ENCODE measurements at regions of chr4 and their contacts with region 1.

Region 1: DNA sequence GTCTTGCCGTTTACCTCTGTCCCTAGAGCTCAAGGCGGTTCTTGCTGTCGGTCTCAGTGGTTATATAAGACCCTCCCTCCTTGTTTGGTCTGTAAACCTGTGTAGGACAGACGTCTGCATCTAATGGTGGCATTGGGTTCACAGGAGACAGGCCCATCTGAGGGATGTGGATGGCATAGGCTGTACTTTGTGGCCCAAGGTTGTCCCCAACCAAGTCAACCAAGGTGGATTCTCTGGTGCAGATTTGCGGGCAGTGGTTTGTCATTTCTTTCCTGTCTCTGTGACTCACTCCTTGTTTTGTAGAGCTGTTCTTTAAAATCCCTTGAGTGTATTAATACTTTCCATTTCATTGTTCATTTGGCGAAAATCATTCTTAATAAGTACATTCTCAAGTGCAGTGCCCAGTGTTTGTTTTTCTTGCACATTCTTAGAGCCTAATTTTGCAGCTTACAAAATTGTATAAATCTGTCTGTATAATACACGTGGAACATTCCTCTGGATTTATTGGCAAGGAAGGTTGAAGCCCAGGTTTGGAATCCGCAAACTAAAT is 68.0 kb upstream of the TLR2 start:
- DNase-seq: peak; percentile 80
- ATAC-seq: peak; percentile 96
- H3K4me3 Mint-ChIP-seq: no peak overlapping the region
- H3K27ac Mint-ChIP-seq: peak overlapping the region; percentile 72
- H3K4me1 Mint-ChIP-seq: peaks cover 40% of the 10 kb centered on the region
- H3K27me3 Mint-ChIP-seq: no peaks in the 10 kb centered on the region

Region 2: GRCh38 chr4:153549401-153549800 is 66.7 kb before region 1 on chr4:
- CTCF ChIA-PET with region 1: no interaction called
- POLR2A ChIA-PET with region 1: no interaction called
- intact Hi-C with region 1: loop called in 1 of 2 experiments (anchors 1 kb)
- DNase-seq: peak; percentile 46
- ATAC-seq: peak; percentile 92
- H3K4me3 Mint-ChIP-seq: no peak overlapping the region
- H3K27ac Mint-ChIP-seq: peak overlapping the region; percentile 47
- H3K4me1 Mint-ChIP-seq: peaks cover 50% of the 10 kb centered on the region
- H3K27me3 Mint-ChIP-seq: no peaks in the 10 kb centered on the region

Region 3: DNA sequence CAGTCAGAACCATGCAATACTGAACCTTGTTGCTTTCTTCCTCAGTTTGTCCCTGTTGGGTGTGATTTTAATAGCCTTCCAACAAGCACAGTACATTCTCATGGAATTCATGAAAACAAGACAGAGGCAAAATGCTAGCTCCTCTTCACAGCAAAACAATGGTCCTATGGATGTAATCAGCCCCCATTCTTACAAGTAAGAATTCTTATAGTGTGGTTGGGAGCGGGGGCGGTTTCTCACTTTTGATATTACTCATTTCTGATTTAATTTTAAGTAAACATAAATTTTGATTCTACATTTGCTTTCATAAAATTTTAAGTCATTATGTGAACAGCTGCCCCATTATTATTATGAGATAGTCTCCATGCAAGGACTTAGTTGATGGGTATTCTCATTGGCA is 12.8 kb before region 1 on chr4:
- CTCF ChIA-PET with region 1: interaction called, 5 read pairs
- POLR2A ChIA-PET with region 1: no interaction called
- intact Hi-C with region 1: loop called in 1 of 2 experiments (anchors 1 kb)
- DNase-seq: peak; percentile 67
- ATAC-seq: peak; percentile 53
- H3K4me3 Mint-ChIP-seq: no peak overlapping the region
- H3K27ac Mint-ChIP-seq: no peak overlapping the region
- H3K4me1 Mint-ChIP-seq: peaks cover 20% of the 10 kb centered on the region
- H3K27me3 Mint-ChIP-seq: no peaks in the 10 kb centered on the region